ENCODE measurements at regions of chr2 and their contacts with region 1.

Region 1: GRCh38 chr2:84781942-84782716 is 98.8 kb downstream of the TRABD2A start:
- DNase-seq: peak in 8 of 9 donors; percentile 29 to 72 (median 57)
- ATAC-seq: peak; percentile 87
- H3K4me3 ChIP-seq: peak overlapping the region; percentile 18
- H3K4me3 Mint-ChIP-seq: peak overlapping the region in 9 of 10 donors; percentile 54 to 85 (median 73)
- H3K27ac ChIP-seq: peak overlapping the region; percentile 64
- H3K27ac Mint-ChIP-seq: peak overlapping the region; percentile 84 to 96 (median 91)
- H3K4me1 ChIP-seq: peaks cover 52 to 75% of the 10 kb centered on the region in 2 donors
- H3K4me1 Mint-ChIP-seq: peaks cover 50 to 92% (median 87%) of the 10 kb centered on the region in 7 donors
- H3K27me3 ChIP-seq: no peaks in the 10 kb centered on the region
- H3K27me3 Mint-ChIP-seq: no peaks in the 10 kb centered on the region

Region 2: GRCh38 chr2:84516234-84516986 is 265.7 kb before region 1 on chr2 and contains the start of gene DNAH6:
- CTCF ChIA-PET with region 1: no interaction called
- POLR2A ChIA-PET with region 1: interaction called, 4 read pairs
- intact Hi-C with region 1: loop called in 1 of 2 experiments (anchors 2 kb)
- DNase-seq: peak; percentile 67 to 94 (median 89)
- ATAC-seq: peak; percentile 99
- H3K4me3 ChIP-seq: peak within 1 kb of the TSS; percentile 78
- H3K4me3 Mint-ChIP-seq: peak within 1 kb of the TSS; percentile 79 to 93 (median 90)
- H3K27ac ChIP-seq: peak within 1 kb of the TSS; percentile 75
- H3K27ac Mint-ChIP-seq: peak within 1 kb of the TSS; percentile 66 to 98 (median 93)
- H3K4me1 ChIP-seq: peaks cover 5 to 6% of the 10 kb centered on the region in 2 donors
- H3K4me1 Mint-ChIP-seq: peaks cover 6 to 27% (median 23%) of the 10 kb centered on the region in 7 donors
- H3K27me3 ChIP-seq: no peaks in the 10 kb centered on the region
- H3K27me3 Mint-ChIP-seq: peaks cover 0 to 41% (median 0%) of the 10 kb centered on the region in 5 donors
- total RNA-seq, gene DNAH6: 0.73 to 2.3 (median 1.1) TPM

Region 3: DNA sequence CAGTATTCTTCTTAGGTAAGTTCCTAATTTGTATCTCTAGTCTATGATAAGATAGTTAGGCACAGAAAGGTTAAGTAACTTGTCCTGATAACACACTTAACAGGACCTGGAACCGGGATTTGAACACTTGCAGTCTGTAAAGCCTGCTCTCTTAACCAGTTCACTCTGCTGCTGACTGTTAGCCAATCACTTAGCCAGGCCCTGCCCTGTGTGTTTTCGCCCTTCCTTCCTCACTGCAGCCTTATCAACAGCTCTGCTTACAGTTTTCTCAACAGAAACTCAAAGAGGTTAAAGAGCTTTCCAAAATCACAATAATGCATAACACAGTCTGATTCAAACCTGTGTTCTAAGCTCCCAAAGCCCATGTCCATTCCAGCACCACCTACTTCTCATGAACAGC is 52.9 kb before region 1 on chr2:
- CTCF ChIA-PET with region 1: no interaction called
- POLR2A ChIA-PET with region 1: interaction called, 5 read pairs
- intact Hi-C with region 1: loop called in 1 of 2 experiments (anchors 2 kb)
- DNase-seq: no peak
- ATAC-seq: no peak
- H3K4me3 ChIP-seq: no peak overlapping the region
- H3K4me3 Mint-ChIP-seq: peak overlapping the region in 4 of 10 donors; percentile 1 to 53 (median 5)
- H3K27ac ChIP-seq: no peak overlapping the region
- H3K27ac Mint-ChIP-seq: peak overlapping the region in 7 of 9 donors; percentile 18 to 85 (median 51)
- H3K4me1 ChIP-seq: peaks cover 0 to 11% of the 10 kb centered on the region in 2 donors
- H3K4me1 Mint-ChIP-seq: peaks cover 3 to 76% (median 61%) of the 10 kb centered on the region in 7 donors
- H3K27me3 ChIP-seq: no peaks in the 10 kb centered on the region
- H3K27me3 Mint-ChIP-seq: no peaks in the 10 kb centered on the region

Region 4: GRCh38 chr2:84800194-84800805 is 18.2 kb after region 1 on chr2:
- CTCF ChIA-PET with region 1: interaction called, 3 read pairs
- POLR2A ChIA-PET with region 1: interaction called, 6 read pairs
- intact Hi-C with region 1: loop called (anchors 1 to 2 kb)
- DNase-seq: no peak
- ATAC-seq: no peak
- H3K4me3 ChIP-seq: peak overlapping the region; percentile 25
- H3K4me3 Mint-ChIP-seq: peak overlapping the region in 9 of 10 donors; percentile 42 to 79 (median 62)
- H3K27ac ChIP-seq: no peak overlapping the region
- H3K27ac Mint-ChIP-seq: peak overlapping the region; percentile 3 to 83 (median 65)
- H3K4me1 ChIP-seq: peaks cover 6 to 12% of the 10 kb centered on the region in 2 donors
- H3K4me1 Mint-ChIP-seq: peaks cover 13 to 60% (median 43%) of the 10 kb centered on the region in 7 donors
- H3K27me3 ChIP-seq: no peaks in the 10 kb centered on the region
- H3K27me3 Mint-ChIP-seq: no peaks in the 10 kb centered on the region

Region 5: DNA sequence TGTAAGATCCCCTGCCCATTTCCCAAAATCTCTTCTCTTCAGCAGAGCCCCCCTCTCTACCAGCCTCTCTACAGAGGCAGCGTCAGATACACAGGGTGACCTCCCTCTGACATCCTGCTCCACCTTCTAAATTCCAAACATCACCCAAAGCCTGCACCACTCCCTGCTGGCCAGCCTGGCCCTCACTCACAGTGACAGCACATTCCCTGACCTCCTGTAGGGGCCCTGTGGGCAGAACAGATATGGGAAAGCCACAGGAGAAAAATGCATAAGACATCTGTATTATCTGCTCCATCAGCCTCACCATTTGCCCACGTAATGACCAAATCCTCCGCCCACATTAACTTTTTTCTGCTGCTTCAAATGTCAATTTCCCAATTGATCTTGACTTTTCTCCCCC is 58.2 kb after region 1 on chr2:
- CTCF ChIA-PET with region 1: no interaction called
- POLR2A ChIA-PET with region 1: interaction called, 14 read pairs
- intact Hi-C with region 1: loop called in 1 of 2 experiments (anchors 5 kb)
- DNase-seq: no peak
- ATAC-seq: peak; percentile 28
- H3K4me3 ChIP-seq: peak overlapping the region; percentile 43
- H3K4me3 Mint-ChIP-seq: peak overlapping the region; percentile 75 to 90 (median 82)
- H3K27ac ChIP-seq: peak overlapping the region; percentile 80
- H3K27ac Mint-ChIP-seq: peak overlapping the region in 8 of 9 donors; percentile 78 to 99 (median 96)
- H3K4me1 ChIP-seq: peaks cover 71 to 95% of the 10 kb centered on the region in 2 donors
- H3K4me1 Mint-ChIP-seq: peaks cover 49 to 97% (median 88%) of the 10 kb centered on the region in 7 donors
- H3K27me3 ChIP-seq: no peaks in the 10 kb centered on the region
- H3K27me3 Mint-ChIP-seq: no peaks in the 10 kb centered on the region

Region 6: GRCh38 chr2:85266146-85267041 is 484.3 kb after region 1 on chr2:
- CTCF ChIA-PET with region 1: no interaction called
- POLR2A ChIA-PET with region 1: no interaction called
- intact Hi-C with region 1: no loop called
- DNase-seq: peak; percentile 27 to 76 (median 48)
- ATAC-seq: peak; percentile 78
- H3K4me3 ChIP-seq: no peak overlapping the region
- H3K4me3 Mint-ChIP-seq: no peak overlapping the region
- H3K27ac ChIP-seq: no peak overlapping the region
- H3K27ac Mint-ChIP-seq: peak overlapping the region in 1 of 9 donors; percentile 21
- H3K4me1 ChIP-seq: no peaks in the 10 kb centered on the region
- H3K4me1 Mint-ChIP-seq: peaks cover 0 to 2% (median 0%) of the 10 kb centered on the region in 7 donors
- H3K27me3 ChIP-seq: no peaks in the 10 kb centered on the region
- H3K27me3 Mint-ChIP-seq: peaks cover 0 to 26% (median 0%) of the 10 kb centered on the region in 5 donors

Measured in naive thymus-derived CD4-positive, alpha-beta T cell (primary cell).